Psoas muscle (tissue), 8 donors: ENCODE measurements at regions of chrX and their contacts with region 1.

Region 1: GRCh38 chrX:102835504-102836146 is 101.4 kb upstream of the RAB40AL start:
- DNase-seq: no peak
- ATAC-seq: no peak
- H3K4me3 ChIP-seq: no peak overlapping the region
- H3K27ac ChIP-seq: no peak overlapping the region
- H3K4me1 ChIP-seq: no peaks in the 10 kb centered on the region
- H3K27me3 ChIP-seq: peaks cover 0 to 2% (median 0%) of the 10 kb centered on the region in 3 donors
- CTCF ChIP-seq: peak; percentile 29

Region 2: GRCh38 chrX:102643275-102643674 is 192.3 kb before region 1 on chrX:
- intact Hi-C with region 1: loop called in 1 of 2 experiments (anchors 10 kb)
- DNase-seq: no peak
- ATAC-seq: no peak
- H3K4me3 ChIP-seq: no peak overlapping the region
- H3K27ac ChIP-seq: no peak overlapping the region
- H3K4me1 ChIP-seq: no peaks in the 10 kb centered on the region
- H3K27me3 ChIP-seq: no peaks in the 10 kb centered on the region
- CTCF ChIP-seq: no peak